Activated CD8-positive, alpha-beta T cell treated with anti-CD3 and anti-CD28 coated beads for 36 hours (primary cell): ENCODE measurements at regions of chr6 and their contacts with region 1.

Region 1: DNA sequence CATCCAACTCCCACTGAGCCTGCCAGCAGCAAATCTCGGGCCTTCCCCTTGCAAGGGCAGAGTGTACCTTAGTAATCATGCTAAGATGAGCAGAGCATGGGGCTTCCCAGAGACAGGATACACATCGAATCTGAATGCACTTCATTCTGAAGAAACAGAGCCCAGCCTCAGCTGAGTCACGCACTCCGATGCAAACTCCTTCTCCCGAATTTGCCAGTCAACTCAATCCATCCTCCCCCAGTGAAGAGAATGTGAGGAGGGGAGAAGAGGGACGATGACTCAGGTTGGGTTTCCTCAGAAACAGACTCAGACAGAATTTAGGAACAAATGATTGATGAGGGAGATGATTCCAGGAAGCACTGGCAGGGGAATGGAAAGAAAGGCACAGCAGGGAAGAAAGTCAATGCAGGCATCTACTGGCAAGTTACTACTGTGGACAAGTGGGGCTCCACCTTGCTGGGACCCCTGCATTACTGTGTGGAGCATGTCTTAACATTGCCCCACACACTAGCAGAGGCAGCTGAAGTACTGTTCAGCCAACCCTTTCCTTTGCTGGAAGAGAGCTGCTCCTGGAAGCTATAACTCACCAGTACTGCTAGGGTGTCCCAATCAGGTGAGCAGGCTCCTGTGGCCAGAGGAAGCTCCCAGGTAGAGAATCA is 251.6 kb downstream of the ADGB start:
- DNase-seq: peak; percentile 60
- ATAC-seq: peak; percentile 73
- H3K4me3 Mint-ChIP-seq: no peak overlapping the region
- H3K27ac Mint-ChIP-seq: peak overlapping the region; percentile 82
- H3K4me1 Mint-ChIP-seq: peaks cover 36% of the 10 kb centered on the region
- H3K27me3 Mint-ChIP-seq: no peaks in the 10 kb centered on the region
- CTCF ChIP-seq: no peak

Region 2: GRCh38 chr6:147081140-147081539 is 230.8 kb after region 1 on chr6:
- CTCF ChIA-PET with region 1: no interaction called
- POLR2A ChIA-PET with region 1: no interaction called
- intact Hi-C with region 1: no loop called
- DNase-seq: no peak
- ATAC-seq: no peak
- H3K4me3 Mint-ChIP-seq: no peak overlapping the region
- H3K27ac Mint-ChIP-seq: no peak overlapping the region
- H3K4me1 Mint-ChIP-seq: peaks cover 2% of the 10 kb centered on the region
- H3K27me3 Mint-ChIP-seq: peaks cover 3% of the 10 kb centered on the region
- CTCF ChIP-seq: no peak

Region 3: DNA sequence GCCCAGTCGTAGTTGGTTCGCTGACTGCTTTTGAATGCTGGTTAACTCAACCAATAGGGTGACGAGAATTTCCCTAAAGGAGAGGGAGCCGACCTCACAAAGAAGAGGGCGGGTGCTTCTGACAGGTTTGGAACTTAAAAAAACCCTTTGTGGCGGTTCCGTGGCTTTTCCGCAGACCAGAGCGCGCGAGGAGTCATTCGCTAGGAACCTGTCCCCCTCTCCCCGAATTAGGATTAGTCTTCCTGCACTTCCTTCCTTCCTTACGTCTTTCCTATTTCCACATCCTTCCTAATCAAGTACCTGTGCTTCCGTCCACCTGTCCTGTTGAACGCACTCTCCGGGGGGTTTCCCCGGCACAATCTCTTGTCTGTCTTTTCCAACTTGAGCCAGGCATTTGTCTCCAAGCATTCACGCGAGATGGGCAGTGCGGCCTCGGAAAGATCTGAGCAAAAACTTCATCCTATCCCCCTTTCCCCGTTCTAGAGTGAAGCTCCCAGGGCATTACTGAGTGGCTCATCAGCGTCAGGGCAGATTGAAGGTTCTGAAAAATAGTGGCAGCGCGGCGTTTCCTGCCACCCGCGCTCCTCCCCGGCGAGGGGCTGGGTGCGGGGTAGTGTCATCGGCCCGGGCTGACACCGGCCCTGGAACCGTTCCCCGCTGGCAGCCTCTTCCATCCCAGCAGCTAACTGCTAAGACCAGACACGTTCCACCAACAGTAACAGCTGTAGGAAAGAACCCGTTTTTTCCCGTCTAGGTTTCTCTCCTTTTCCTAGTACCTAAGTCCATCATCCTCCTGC is 352.3 kb after region 1 on chr6:
- CTCF ChIA-PET with region 1: no interaction called
- POLR2A ChIA-PET with region 1: interaction called, 3 read pairs
- intact Hi-C with region 1: loop called (anchors 5 kb)
- DNase-seq: peak; percentile 88
- ATAC-seq: peak; percentile 89
- H3K4me3 Mint-ChIP-seq: peak overlapping the region; percentile 95
- H3K27ac Mint-ChIP-seq: peak overlapping the region; percentile 98
- H3K4me1 Mint-ChIP-seq: peaks cover 25% of the 10 kb centered on the region
- H3K27me3 Mint-ChIP-seq: no peaks in the 10 kb centered on the region
- CTCF ChIP-seq: no peak